ENCODE measurements at regions of chr12 and their contacts with region 1.

Region 1: DNA sequence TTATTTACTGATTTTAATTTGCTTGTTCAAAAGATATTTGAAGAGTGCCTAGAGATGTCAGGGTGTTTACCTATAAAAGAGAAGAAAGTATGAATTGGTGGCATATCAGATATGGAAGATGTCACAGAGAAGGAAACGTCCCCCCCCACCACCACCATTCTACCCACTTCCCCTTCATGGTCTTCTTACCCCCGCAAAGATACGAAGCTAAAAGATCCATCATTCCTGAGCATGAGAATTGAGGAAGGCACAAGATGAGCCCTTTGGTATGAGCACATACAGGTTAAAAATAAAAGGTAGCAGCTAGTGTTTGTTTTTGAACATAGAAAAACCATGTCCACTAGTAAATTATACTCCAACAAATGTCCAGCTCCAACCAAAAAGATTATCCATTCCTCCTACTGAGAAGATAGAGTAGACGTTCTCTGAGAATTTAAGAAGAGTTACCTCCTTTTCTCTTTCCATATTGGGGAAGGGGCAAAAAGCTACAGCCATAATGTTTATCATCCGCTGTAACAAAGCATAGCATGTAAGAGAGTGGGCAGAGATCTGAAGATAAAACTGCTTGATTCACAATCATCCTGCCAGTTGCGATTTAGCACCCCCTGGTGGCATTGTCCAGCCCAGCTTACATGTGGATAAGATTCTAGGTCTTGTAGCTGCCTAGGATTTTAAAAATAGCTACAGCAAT is 29.1 kb downstream of the NFYB start:
- DNase-seq: peak; percentile 74 to 95 (median 83)
- H3K4me3 ChIP-seq: no peak overlapping the region
- H3K27ac ChIP-seq: peak overlapping the region in 4 of 59 donors; percentile 2 to 39 (median 8)
- H3K27me3 ChIP-seq: no peaks in the 10 kb centered on the region
- CTCF ChIP-seq: peak; percentile 70 to 93 (median 87)

Region 2: GRCh38 chr12:103877934-103878510 is 230.9 kb before region 1 on chr12:
- intact Hi-C with region 1: loop called in 1 of 2 experiments (anchors 10 kb)
- DNase-seq: peak in 3 of 10 donors; percentile 6 to 36 (median 16)
- H3K4me3 ChIP-seq: no peak overlapping the region
- H3K27ac ChIP-seq: no peak overlapping the region
- H3K27me3 ChIP-seq: no peaks in the 10 kb centered on the region
- CTCF ChIP-seq: peak; percentile 39 to 75 (median 64)

Region 3: DNA sequence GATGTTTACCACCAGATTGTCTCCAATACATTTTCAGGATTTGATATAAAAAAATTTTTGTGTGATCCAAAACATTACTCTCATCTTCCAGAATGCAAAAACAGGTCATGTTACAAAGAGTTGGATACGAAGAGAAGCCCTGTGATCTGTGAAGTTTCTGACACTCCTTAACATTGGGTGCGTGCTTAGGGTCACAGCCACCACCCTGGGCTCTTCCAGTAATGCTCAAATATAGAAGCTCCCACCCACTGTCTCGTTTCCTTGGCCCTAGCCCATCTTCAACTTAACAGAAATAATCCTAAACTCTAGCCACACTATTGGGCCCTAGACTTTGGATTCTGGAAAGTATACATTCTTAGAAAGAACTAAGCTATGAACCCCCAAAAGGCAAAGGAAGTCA is 211.6 kb before region 1 on chr12:
- intact Hi-C with region 1: no loop called
- DNase-seq: no peak
- H3K4me3 ChIP-seq: no peak overlapping the region
- H3K27ac ChIP-seq: no peak overlapping the region
- H3K27me3 ChIP-seq: no peaks in the 10 kb centered on the region
- CTCF ChIP-seq: no peak

Region 4: GRCh38 chr12:103965590-103966504 is 143.1 kb before region 1 on chr12 and contains the start of gene TDG:
- intact Hi-C with region 1: loop called in 1 of 2 experiments (anchors 5 kb)
- DNase-seq: peak; percentile 96 to 99 (median 98)
- H3K4me3 ChIP-seq: peak within 1 kb of the TSS; percentile 55 to 99 (median 89)
- H3K27ac ChIP-seq: peak within 1 kb of the TSS; percentile 65 to 98 (median 94)
- H3K27me3 ChIP-seq: no peaks in the 10 kb centered on the region
- CTCF ChIP-seq: peak in 47 of 56 donors; percentile 0 to 58 (median 32)
- total RNA-seq, gene TDG: 9.9 to 22.2 (median 15.5) TPM